CD4-positive, alpha-beta T cell (primary cell): ENCODE measurements at regions of chr12 and their contacts with region 1.

Region 1: DNA sequence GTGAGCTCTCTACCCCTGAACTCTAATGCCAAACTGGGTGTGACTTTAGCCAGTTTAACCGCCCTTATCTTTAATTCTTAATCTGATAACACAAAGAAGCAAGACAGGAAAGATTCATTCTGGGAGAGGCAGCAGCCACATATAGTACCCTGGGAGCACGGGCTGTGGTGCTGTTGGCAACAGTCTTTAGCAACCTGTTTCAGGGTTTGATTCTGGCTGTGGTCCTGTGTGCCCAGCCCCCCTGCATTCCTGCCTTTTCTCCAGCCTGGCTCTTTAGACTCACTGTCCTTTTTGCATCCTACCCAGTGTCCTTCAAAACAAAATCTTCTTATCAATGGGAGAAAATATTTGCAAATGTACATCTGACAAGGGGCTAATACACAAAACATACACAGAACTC is 275.2 kb downstream of the GXYLT1 start:
- DNase-seq: no peak
- ATAC-seq: no peak
- H3K4me3 ChIP-seq: no peak overlapping the region
- H3K4me3 Mint-ChIP-seq: no peak overlapping the region
- H3K27ac ChIP-seq: no peak overlapping the region
- H3K27ac Mint-ChIP-seq: no peak overlapping the region
- H3K4me1 ChIP-seq: no peaks in the 10 kb centered on the region
- H3K4me1 Mint-ChIP-seq: no peaks in the 10 kb centered on the region
- H3K27me3 ChIP-seq: no peaks in the 10 kb centered on the region
- H3K27me3 Mint-ChIP-seq: peaks cover 13% of the 10 kb centered on the region
- CTCF ChIP-seq: no peak

Region 2: GRCh38 chr12:41850046-41850445 is 19.4 kb before region 1 on chr12:
- CTCF ChIA-PET with region 1: no interaction called
- POLR2A ChIA-PET with region 1: no interaction called
- intact Hi-C with region 1: loop called in 1 of 2 experiments (anchors 2 kb)
- DNase-seq: no peak
- ATAC-seq: no peak
- H3K4me3 ChIP-seq: no peak overlapping the region
- H3K4me3 Mint-ChIP-seq: no peak overlapping the region
- H3K27ac ChIP-seq: no peak overlapping the region
- H3K27ac Mint-ChIP-seq: no peak overlapping the region
- H3K4me1 ChIP-seq: no peaks in the 10 kb centered on the region
- H3K4me1 Mint-ChIP-seq: no peaks in the 10 kb centered on the region
- H3K27me3 ChIP-seq: no peaks in the 10 kb centered on the region
- H3K27me3 Mint-ChIP-seq: no peaks in the 10 kb centered on the region
- CTCF ChIP-seq: no peak